ENCODE measurements at regions of chr7 and their contacts with region 1.

Region 1: DNA sequence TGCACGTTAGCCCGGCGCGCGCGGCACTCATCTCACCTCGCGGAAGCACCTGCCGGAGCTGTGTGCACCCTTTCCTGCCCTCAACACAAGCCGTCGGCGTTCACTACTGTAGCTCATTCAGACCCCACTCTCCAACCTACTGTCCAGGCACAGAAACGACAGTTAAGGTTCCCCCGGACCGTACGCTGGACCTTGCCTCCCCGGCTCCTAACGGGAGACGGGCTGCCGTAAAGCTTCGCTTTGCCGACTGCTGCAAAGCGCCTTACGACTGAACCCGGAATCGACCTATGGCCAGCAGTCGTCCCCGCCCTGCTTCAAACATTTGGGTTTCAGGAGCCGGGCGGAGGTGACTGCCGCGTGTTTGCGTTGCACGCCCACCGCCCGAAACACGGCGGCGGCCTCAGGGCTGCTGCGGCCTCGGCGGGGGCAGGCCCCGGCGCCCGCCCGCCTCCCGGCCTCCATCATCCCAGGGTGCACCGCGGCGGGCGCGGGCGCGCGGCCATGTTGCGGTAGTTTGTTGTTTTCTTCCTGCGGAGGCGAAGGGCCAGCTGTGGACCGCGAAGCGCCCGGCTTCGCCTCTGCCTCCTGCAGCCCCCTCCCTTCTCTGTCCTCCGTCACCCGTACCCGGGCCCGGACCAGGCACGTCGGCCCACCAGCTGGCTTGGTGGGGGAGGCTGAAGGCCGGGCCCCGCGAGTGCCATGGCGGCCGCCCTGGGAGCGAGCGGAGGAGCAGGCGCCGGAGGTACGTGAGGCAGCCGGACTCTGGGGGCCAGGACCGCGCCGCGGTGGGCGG is at the start of gene RBM33:
- DNase-seq: peak; percentile 59 to 87 (median 78)
- ATAC-seq: peak; percentile 76
- H3K4me3 ChIP-seq: peak within 1 kb of the TSS; percentile 97 to 98
- H3K4me3 Mint-ChIP-seq: peak within 1 kb of the TSS; percentile 98
- H3K27ac ChIP-seq: peak within 1 kb of the TSS; percentile 82 to 92
- H3K27ac Mint-ChIP-seq: peak within 1 kb of the TSS; percentile 99
- H3K4me1 ChIP-seq: peaks cover 31% of the 10 kb centered on the region
- H3K4me1 Mint-ChIP-seq: peaks cover 52% of the 10 kb centered on the region
- H3K27me3 ChIP-seq: no peaks in the 10 kb centered on the region
- H3K27me3 Mint-ChIP-seq: no peaks in the 10 kb centered on the region
- CTCF ChIP-seq: no peak
- total RNA-seq, gene RBM33: 169 to 184 TPM

Region 2: GRCh38 chr7:155003376-155004214 is 640.8 kb before region 1 on chr7:
- CTCF ChIA-PET with region 1: no interaction called
- POLR2A ChIA-PET with region 1: interaction called, 3 read pairs
- intact Hi-C with region 1: loop called (anchors 2 kb)
- DNase-seq: peak; percentile 73 to 91 (median 86)
- ATAC-seq: peak; percentile 89
- H3K4me3 ChIP-seq: peak overlapping the region; percentile 92 to 93
- H3K4me3 Mint-ChIP-seq: peak overlapping the region; percentile 93
- H3K27ac ChIP-seq: peak overlapping the region; percentile 69 to 72
- H3K27ac Mint-ChIP-seq: peak overlapping the region; percentile 93
- H3K4me1 ChIP-seq: peaks cover 11% of the 10 kb centered on the region
- H3K4me1 Mint-ChIP-seq: peaks cover 24% of the 10 kb centered on the region
- H3K27me3 ChIP-seq: no peaks in the 10 kb centered on the region
- H3K27me3 Mint-ChIP-seq: no peaks in the 10 kb centered on the region
- CTCF ChIP-seq: no peak

Region 3: DNA sequence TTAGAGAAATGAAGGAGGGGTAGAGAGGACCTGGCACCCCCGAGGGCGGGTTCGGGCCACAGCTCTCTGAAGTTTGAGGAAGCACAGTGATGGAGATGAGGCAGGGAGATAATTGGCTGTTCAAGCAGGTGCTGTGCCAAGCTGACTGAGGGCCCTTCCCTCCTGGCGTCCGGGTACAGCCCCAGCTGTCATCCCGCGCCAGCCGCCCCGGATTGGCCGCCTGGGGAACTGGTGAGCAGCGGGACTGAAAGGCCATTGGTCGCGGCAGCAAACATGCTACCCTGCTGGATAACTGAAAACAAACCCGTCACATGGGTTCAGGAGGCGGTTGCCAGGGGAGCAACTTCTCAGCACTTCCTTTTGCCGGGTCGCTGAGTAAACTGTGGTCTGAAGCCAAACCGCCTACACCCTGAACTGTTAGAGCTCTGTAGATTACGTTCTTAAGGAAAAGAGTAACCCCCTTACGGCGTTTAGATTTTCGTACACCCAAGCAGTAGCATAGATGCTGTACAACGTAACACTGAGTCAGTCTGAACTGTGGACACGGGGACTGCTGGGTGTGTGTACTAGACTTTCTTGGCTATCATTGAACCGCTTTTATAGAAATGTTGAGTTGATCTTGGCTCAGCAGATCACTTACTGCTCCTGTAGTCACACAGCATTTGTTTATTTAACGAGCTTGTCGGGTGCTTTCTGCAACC is 345.4 kb before region 1 on chr7:
- CTCF ChIA-PET with region 1: no interaction called
- POLR2A ChIA-PET with region 1: interaction called, 3 read pairs
- intact Hi-C with region 1: loop called (anchors 1 to 2 kb)
- DNase-seq: peak; percentile 92 to 99 (median 96)
- ATAC-seq: peak; percentile 70
- H3K4me3 ChIP-seq: peak overlapping the region; percentile 57 to 67
- H3K4me3 Mint-ChIP-seq: peak overlapping the region; percentile 90
- H3K27ac ChIP-seq: peak overlapping the region; percentile 79 to 90
- H3K27ac Mint-ChIP-seq: peak overlapping the region; percentile 98
- H3K4me1 ChIP-seq: peaks cover 34% of the 10 kb centered on the region
- H3K4me1 Mint-ChIP-seq: peaks cover 42% of the 10 kb centered on the region
- H3K27me3 ChIP-seq: no peaks in the 10 kb centered on the region
- H3K27me3 Mint-ChIP-seq: no peaks in the 10 kb centered on the region
- CTCF ChIP-seq: no peak

Region 4: DNA sequence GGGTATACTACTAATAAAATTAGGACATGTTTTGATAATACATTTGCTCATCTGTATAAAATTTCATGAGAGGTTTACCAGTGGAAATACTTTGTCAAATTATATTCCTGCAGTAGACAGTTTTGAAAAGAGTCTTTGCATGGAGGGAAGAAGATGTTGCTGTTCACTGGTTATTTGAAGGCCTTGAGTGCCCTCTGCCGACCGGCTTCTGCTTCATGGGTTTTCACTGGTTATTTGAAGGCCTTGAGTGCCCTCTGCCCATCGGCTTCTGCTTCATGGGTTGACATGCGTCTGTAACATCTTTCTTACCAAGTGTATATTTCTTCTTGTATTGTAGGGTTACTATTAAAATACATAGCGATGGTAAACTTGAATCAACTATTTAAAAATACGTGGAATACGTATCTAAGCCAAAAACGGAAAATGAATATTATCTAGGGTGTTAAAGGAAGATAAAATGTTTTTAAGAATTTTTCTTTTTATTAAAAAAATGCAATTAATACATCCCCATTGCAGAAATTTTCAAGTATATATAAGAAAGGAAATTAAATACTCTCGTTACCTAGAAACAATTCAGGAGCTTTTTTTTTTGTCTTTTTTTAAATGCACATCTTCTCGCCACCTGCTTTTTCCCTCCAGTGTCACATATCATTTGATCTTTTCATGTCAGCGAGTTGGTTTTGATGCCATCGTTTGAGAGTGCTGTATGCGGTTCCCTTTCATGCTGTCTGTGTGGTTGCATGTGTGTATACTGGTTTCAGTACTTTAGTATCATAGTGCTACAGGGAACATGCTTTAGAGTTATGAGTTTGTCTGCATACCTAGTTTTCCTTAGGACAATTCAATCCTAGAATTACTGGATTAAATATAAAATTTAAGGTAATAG is 94.5 kb after region 1 on chr7:
- CTCF ChIA-PET with region 1: no interaction called
- POLR2A ChIA-PET with region 1: no interaction called
- intact Hi-C with region 1: loop called in 1 of 2 experiments (anchors 5 kb)
- DNase-seq: peak; percentile 41 to 81 (median 67)
- ATAC-seq: peak; percentile 86
- H3K4me3 ChIP-seq: no peak overlapping the region
- H3K4me3 Mint-ChIP-seq: peak overlapping the region; percentile 1
- H3K27ac ChIP-seq: peak overlapping the region in 1 of 2 experiments; percentile 29
- H3K27ac Mint-ChIP-seq: peak overlapping the region; percentile 55
- H3K4me1 ChIP-seq: peaks cover 30% of the 10 kb centered on the region
- H3K4me1 Mint-ChIP-seq: peaks cover 43% of the 10 kb centered on the region
- H3K27me3 ChIP-seq: no peaks in the 10 kb centered on the region
- H3K27me3 Mint-ChIP-seq: no peaks in the 10 kb centered on the region
- CTCF ChIP-seq: peak; percentile 64

Region 5: DNA sequence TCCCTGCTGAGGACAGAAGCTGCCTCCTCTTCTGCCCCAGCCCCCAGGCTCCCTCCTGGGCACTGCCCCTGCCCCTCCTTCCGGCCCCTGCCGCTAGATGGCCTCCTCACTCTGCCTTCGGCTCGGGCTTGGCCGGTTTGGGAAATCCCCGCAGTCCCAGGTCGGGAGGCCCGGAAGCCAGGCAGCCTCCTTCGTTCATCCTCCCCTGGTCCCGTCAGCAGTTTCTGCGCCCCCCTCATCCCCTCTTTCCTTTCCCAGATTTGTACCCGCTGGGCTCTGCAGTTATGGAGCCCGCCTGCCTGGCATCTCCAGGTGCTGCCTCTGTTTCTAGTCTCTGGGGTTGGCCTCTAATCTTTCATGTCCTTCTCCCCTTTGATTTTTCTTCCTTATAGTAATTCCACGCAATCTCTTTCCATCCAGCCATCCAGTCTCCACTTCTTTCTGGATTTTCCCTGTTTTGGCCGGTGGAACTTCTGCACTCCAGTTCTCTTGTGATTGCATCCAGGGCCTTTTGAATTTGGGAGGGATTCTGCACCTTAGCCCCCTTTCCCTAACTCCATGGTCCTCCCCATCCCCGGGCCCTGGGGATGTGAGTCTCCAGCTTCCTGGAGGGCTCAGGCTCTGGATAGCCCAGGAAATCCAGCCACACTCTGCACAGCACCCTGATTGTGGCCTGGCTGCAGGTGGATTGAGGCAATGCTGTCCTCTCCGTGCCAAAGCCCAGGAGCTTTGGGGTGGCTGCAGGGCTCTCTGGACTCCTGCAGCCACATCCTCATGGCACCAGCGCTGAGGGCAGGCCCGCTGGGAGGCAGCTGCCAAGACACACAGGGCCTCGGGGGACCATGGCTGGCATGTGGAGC is 171.2 kb after region 1 on chr7:
- CTCF ChIA-PET with region 1: no interaction called
- POLR2A ChIA-PET with region 1: no interaction called
- intact Hi-C with region 1: no loop called
- DNase-seq: peak; percentile 26 to 73 (median 57)
- ATAC-seq: peak; percentile 64
- H3K4me3 ChIP-seq: no peak overlapping the region
- H3K4me3 Mint-ChIP-seq: no peak overlapping the region
- H3K27ac ChIP-seq: no peak overlapping the region
- H3K27ac Mint-ChIP-seq: no peak overlapping the region
- H3K4me1 ChIP-seq: no peaks in the 10 kb centered on the region
- H3K4me1 Mint-ChIP-seq: peaks cover 15% of the 10 kb centered on the region
- H3K27me3 ChIP-seq: peaks cover 0 to 11% of the 10 kb centered on the region in 2 experiments
- H3K27me3 Mint-ChIP-seq: peaks cover 41% of the 10 kb centered on the region
- CTCF ChIP-seq: peak; percentile 33

Region 6: GRCh38 chr7:157138424-157139110 is 1494.2 kb after region 1 on chr7 and contains the start of gene UBE3C:
- CTCF ChIA-PET with region 1: no interaction called
- POLR2A ChIA-PET with region 1: no interaction called
- intact Hi-C with region 1: loop called in 1 of 2 experiments (anchors 5 kb)
- DNase-seq: peak; percentile 81 to 97 (median 89)
- ATAC-seq: peak; percentile 85
- H3K4me3 ChIP-seq: peak within 1 kb of the TSS; percentile 57 to 59
- H3K4me3 Mint-ChIP-seq: peak within 1 kb of the TSS; percentile 84
- H3K27ac ChIP-seq: peak within 1 kb of the TSS; percentile 76 to 88
- H3K27ac Mint-ChIP-seq: peak within 1 kb of the TSS; percentile 94
- H3K4me1 ChIP-seq: peaks cover 38% of the 10 kb centered on the region
- H3K4me1 Mint-ChIP-seq: peaks cover 41% of the 10 kb centered on the region
- H3K27me3 ChIP-seq: no peaks in the 10 kb centered on the region
- H3K27me3 Mint-ChIP-seq: no peaks in the 10 kb centered on the region
- CTCF ChIP-seq: no peak
- total RNA-seq, gene UBE3C: 25.3 to 28.8 TPM